H1 (cell line): ENCODE measurements at regions of chr5 and their contacts with region 1.

Region 1: DNA sequence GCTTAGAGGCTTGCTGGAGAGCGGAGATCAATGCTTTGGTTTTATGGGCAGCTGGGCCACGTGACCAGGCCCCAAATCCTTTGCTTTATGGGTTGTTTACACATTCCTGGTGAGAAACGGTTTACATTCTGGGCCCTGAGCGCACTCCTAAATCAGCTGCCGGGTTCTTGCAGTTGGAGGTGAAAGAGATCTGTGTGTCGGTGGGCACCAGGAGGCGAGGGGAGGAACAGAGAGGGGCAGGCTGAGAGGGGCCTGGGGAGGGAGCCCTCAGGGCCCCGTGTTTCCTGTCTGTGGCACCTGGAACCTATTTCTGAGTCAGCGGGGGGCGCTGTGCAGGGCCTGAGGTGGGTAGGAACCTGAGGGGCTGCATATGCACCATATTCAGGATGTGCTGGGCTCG is 63.5 kb upstream of the HAND1 start:
- DNase-seq: peak in 1 of 2 experiments; percentile 77
- H3K4me3 ChIP-seq: no peak overlapping the region
- H3K27ac ChIP-seq: no peak overlapping the region
- H3K4me1 ChIP-seq: peaks cover 0 to 3% (median 1%) of the 10 kb centered on the region in 4 experiments; a peak in 3 of 7 replicates
- H3K27me3 ChIP-seq: 0 out of 7 replicates have a peak, but pooled peaks cover 0 to 2% (median 0%) of the 10 kb centered on the region in 4 experiments
- CTCF ChIP-seq: peak; percentile 59 to 65 (median 63)
- EP300 ChIP-seq: no peak
- POLR2A ChIP-seq: no peak
- RAD21 ChIP-seq: peak; percentile 31 to 45

Region 2: GRCh38 chr5:154487541-154487940 is 54.0 kb before region 1 on chr5:
- CTCF ChIA-PET with region 1: no interaction called
- POLR2A ChIA-PET with region 1: no interaction called
- DNase-seq: no peak
- H3K4me3 ChIP-seq: no peak overlapping the region
- H3K27ac ChIP-seq: no peak overlapping the region
- H3K4me1 ChIP-seq: peaks cover 10 to 29% (median 19%) of the 10 kb centered on the region in 4 experiments; a peak in 6 of 7 replicates
- H3K27me3 ChIP-seq: peaks cover 43 to 60% (median 54%) of the 10 kb centered on the region in 4 experiments
- CTCF ChIP-seq: no peak
- EP300 ChIP-seq: no peak
- POLR2A ChIP-seq: no peak
- RAD21 ChIP-seq: no peak

Region 3: GRCh38 chr5:154526231-154527226 is 15.0 kb before region 1 on chr5:
- CTCF ChIA-PET with region 1: interaction called, 23 read pairs
- POLR2A ChIA-PET with region 1: interaction called, 4 read pairs
- DNase-seq: no peak
- H3K4me3 ChIP-seq: no peak overlapping the region
- H3K27ac ChIP-seq: no peak overlapping the region
- H3K4me1 ChIP-seq: peaks cover 0 to 3% (median under 1%) of the 10 kb centered on the region in 4 experiments; a peak in 3 of 7 replicates
- H3K27me3 ChIP-seq: peaks cover 0 to 4% (median 3%) of the 10 kb centered on the region in 4 experiments; a peak in 3 of 7 replicates
- CTCF ChIP-seq: no peak
- EP300 ChIP-seq: no peak
- POLR2A ChIP-seq: no peak
- RAD21 ChIP-seq: no peak

Region 4: GRCh38 chr5:154559398-154560276 is 18.1 kb after region 1 on chr5:
- CTCF ChIA-PET with region 1: interaction called, 21 read pairs
- POLR2A ChIA-PET with region 1: no interaction called
- DNase-seq: no peak
- H3K4me3 ChIP-seq: no peak overlapping the region
- H3K27ac ChIP-seq: no peak overlapping the region
- H3K4me1 ChIP-seq: no peaks in the 10 kb centered on the region
- H3K27me3 ChIP-seq: no peaks in the 10 kb centered on the region
- CTCF ChIP-seq: no peak
- EP300 ChIP-seq: no peak
- POLR2A ChIP-seq: no peak
- RAD21 ChIP-seq: no peak

Region 5: DNA sequence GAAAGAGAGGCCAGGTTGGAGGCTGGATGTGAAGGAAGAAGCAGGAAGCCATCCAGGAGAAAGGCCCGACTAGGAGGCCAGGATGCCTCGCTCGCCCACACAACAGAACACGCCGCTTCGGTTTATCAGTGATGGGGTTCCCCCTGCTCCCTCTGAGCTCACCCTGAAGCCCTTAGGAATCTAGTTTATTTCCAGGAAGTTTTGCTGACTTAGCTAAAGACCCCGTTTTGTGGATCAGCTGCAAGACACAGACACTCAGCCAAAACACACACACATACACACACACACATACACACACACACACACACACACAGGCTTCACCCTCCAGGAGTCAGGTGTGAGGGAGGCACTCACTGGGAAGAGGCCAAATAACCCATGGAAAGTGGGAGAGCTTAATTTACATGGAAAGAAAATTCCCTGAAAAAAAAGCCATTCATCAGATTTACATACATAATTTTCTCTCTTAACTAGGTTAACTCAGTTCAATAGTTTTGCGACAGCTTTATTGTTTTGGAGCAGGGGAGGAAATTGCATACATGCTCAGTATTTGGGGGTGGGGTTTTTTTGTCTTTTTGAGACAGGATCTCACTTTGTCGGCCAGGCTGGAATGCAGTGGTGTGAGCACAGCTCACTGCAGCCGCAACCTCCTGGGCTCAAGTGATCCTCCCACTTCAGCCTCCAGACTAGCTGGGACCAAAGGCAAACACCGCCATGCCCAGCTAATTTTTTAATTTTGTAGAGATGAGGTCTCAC is 29.2 kb after region 1 on chr5:
- CTCF ChIA-PET with region 1: interaction called, 11 read pairs
- POLR2A ChIA-PET with region 1: interaction called, 3 read pairs
- DNase-seq: no peak
- H3K4me3 ChIP-seq: no peak overlapping the region
- H3K27ac ChIP-seq: no peak overlapping the region
- H3K4me1 ChIP-seq: no peaks in the 10 kb centered on the region; a peak in 1 of 7 replicates
- H3K27me3 ChIP-seq: peaks cover 0 to 4% (median 0%) of the 10 kb centered on the region in 4 experiments; a peak in 5 of 7 replicates
- CTCF ChIP-seq: no peak
- EP300 ChIP-seq: no peak
- POLR2A ChIP-seq: no peak
- RAD21 ChIP-seq: no peak

Region 6: DNA sequence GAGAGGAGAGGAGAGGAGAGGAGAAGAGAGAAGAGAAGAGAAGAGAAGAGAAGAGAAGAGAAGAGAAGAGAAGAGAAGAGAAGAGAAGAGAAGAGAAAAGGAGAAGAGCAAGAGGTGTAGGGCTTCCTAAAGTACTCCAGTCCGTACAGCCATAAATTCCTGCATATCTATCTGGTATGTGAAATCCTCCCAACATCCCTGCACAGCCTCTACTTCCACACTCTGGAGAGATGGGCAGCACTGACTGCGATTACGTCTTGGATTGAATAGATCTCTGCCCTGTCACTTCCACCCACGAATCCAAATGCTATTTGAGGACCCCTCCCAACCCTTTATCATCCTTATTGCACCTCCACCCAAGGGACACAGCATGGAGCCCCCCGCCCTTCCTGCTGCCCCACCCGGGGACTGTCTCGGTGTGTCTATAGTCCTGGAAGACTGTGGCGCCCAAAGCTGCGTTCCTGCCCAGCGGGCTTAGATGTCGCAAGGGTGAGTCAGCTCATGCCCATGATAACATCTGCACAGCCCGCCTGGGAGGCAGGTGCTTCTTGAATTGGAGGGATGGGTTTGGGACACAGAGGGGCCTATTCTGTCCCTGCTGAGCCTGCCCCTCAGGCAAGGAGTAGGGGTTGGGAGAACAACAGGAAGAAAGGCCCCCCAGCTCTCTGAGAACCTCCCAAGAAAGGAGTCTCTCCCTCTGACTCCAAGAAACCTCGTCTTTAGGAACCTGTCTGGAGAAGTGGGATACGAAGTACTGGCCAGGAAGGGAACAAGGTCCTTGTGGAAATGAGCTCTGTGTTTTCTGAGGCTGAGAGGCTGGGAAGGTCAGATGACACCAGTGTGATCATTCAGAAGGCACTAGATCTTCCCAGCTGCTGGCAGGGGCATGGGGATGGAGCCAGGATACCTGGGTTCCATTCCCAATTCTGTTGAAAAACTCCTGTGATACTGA is 42.3 kb after region 1 on chr5:
- CTCF ChIA-PET with region 1: interaction called, 11 read pairs
- POLR2A ChIA-PET with region 1: no interaction called
- DNase-seq: no peak
- H3K4me3 ChIP-seq: no peak overlapping the region
- H3K27ac ChIP-seq: no peak overlapping the region
- H3K4me1 ChIP-seq: peaks cover 0 to 2% (median 0%) of the 10 kb centered on the region in 4 experiments; a peak in 1 of 7 replicates
- H3K27me3 ChIP-seq: no peaks in the 10 kb centered on the region
- CTCF ChIP-seq: no peak
- EP300 ChIP-seq: no peak
- POLR2A ChIP-seq: no peak
- RAD21 ChIP-seq: no peak